IMR-90 (cell line): ENCODE measurements at regions of chr12 and their contacts with region 1.

Region 1: GRCh38 chr12:14167005-14167628 is 185.7 kb upstream of the GRIN2B start:
- DNase-seq: peak; percentile 41
- ATAC-seq: peak; percentile 93
- H3K4me3 ChIP-seq: no peak overlapping the region
- H3K27ac ChIP-seq: no peak overlapping the region
- H3K4me1 ChIP-seq: no peaks in the 10 kb centered on the region
- H3K27me3 ChIP-seq: no peaks in the 10 kb centered on the region
- CTCF ChIP-seq: peak; percentile 95
- POLR2A ChIP-seq: no peak
- RAD21 ChIP-seq: peak; percentile 89

Region 2: DNA sequence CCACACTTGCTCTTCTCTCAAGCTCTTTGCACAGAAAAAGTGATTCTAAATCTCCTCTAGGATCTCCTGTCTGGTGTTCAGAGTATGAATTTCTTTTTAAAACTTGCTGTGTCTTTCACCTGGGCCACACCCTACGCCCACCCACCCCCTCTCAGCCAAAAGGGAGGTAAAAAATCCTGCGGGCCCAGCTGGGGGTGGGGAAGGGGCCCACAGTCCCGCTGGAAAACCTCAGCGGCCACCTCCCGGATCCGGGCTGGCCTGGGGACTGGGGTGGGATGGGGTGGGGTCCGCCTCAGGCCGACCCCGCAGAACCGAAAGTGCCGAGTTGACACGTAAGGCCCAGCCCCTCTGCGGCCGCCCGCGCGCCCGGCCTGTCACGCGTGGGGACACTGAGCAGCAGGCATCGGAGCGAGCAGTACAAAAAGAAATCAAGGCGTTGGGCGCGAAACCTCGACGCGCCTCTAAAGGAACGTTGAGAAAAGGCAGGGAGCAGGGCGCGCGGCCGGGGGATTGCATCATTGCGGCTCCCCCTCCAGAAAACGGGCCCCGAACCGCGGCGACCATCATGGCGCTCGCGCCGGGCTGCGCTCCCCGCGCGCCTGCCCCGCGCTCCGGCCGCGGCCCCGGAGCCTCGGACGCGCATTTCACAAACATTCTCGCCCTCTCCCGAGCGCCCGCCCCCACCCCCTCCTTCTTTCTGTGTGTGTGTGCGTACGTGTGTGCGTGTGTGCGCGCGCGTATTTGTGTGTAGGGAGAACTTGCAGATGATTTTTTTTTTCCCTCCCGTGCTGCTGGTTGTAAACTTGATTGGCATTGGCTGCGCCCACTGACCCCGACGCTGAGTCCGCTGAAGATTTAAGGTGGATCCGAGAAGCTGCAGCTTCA is 1442.2 kb before region 1 on chr12:
- CTCF ChIA-PET with region 1: no interaction called
- POLR2A ChIA-PET with region 1: no interaction called
- dilution Hi-C with region 1: no loop called
- in situ Hi-C with region 1: no loop called
- intact Hi-C with region 1: loop called (anchors 10 kb)
- DNase-seq: peak; percentile 100
- ATAC-seq: peak; percentile 65
- H3K4me3 ChIP-seq: peak overlapping the region; percentile 94
- H3K27ac ChIP-seq: peak overlapping the region; percentile 100
- H3K4me1 ChIP-seq: no peaks in the 10 kb centered on the region; the same call in 1 of the 2 replicates
- H3K27me3 ChIP-seq: no peaks in the 10 kb centered on the region
- CTCF ChIP-seq: no peak
- POLR2A ChIP-seq: peak; percentile 71
- RAD21 ChIP-seq: no peak

Region 3: GRCh38 chr12:13255792-13256691 is 911.1 kb before region 1 on chr12:
- CTCF ChIA-PET with region 1: interaction called, 7 read pairs
- POLR2A ChIA-PET with region 1: no interaction called
- dilution Hi-C with region 1: no loop called
- in situ Hi-C with region 1: no loop called
- intact Hi-C with region 1: loop called (anchors 1 kb)
- DNase-seq: peak; percentile 92
- ATAC-seq: peak; percentile 100
- H3K4me3 ChIP-seq: peak overlapping the region; percentile 33
- H3K27ac ChIP-seq: no peak overlapping the region
- H3K4me1 ChIP-seq: peaks cover 5% of the 10 kb centered on the region
- H3K27me3 ChIP-seq: 0 out of 2 replicates have a peak, but pooled peaks cover 2% of the 10 kb centered on the region
- CTCF ChIP-seq: peak; percentile 98
- POLR2A ChIP-seq: no peak
- RAD21 ChIP-seq: peak; percentile 85

Region 4: GRCh38 chr12:13362260-13362841 is 804.8 kb before region 1 on chr12:
- CTCF ChIA-PET with region 1: no interaction called
- POLR2A ChIA-PET with region 1: no interaction called
- dilution Hi-C with region 1: no loop called
- in situ Hi-C with region 1: no loop called
- intact Hi-C with region 1: loop called (anchors 2 kb)
- DNase-seq: peak; percentile 5
- ATAC-seq: no peak
- H3K4me3 ChIP-seq: no peak overlapping the region
- H3K27ac ChIP-seq: no peak overlapping the region
- H3K4me1 ChIP-seq: no peaks in the 10 kb centered on the region
- H3K27me3 ChIP-seq: no peaks in the 10 kb centered on the region; the same call in 1 of the 2 replicates
- CTCF ChIP-seq: peak; percentile 44
- POLR2A ChIP-seq: no peak
- RAD21 ChIP-seq: peak; percentile 24; the same call in 1 of the 2 replicates

Region 5: DNA sequence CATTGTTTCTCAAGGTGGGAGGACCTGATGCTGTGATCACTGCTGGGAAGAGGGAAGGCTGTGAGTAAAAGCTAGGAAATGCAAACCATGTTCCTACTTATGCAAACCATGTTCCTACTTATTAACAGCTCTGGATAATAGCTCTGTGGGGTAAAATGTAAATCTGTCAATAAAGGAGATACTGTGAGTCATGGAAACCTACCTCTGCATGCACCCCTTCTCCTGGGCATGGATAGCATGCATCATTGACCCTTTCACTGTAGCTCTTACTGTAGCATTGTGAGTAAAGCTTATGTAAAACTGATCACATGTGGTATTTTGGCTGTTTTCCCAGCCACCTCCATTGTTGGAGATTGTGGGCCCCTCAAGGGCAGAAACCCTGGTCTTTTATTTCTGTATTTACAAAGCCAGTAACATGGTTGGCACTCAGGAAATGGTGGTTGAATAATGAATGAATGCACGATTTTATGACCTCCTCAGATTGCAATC is 439.4 kb before region 1 on chr12:
- CTCF ChIA-PET with region 1: no interaction called
- POLR2A ChIA-PET with region 1: no interaction called
- dilution Hi-C with region 1: no loop called
- in situ Hi-C with region 1: loop called (anchors 25 kb)
- intact Hi-C with region 1: no loop called
- DNase-seq: no peak
- ATAC-seq: no peak
- H3K4me3 ChIP-seq: no peak overlapping the region
- H3K27ac ChIP-seq: no peak overlapping the region
- H3K4me1 ChIP-seq: no peaks in the 10 kb centered on the region
- H3K27me3 ChIP-seq: no peaks in the 10 kb centered on the region
- CTCF ChIP-seq: no peak
- POLR2A ChIP-seq: no peak
- RAD21 ChIP-seq: no peak

Region 6: DNA sequence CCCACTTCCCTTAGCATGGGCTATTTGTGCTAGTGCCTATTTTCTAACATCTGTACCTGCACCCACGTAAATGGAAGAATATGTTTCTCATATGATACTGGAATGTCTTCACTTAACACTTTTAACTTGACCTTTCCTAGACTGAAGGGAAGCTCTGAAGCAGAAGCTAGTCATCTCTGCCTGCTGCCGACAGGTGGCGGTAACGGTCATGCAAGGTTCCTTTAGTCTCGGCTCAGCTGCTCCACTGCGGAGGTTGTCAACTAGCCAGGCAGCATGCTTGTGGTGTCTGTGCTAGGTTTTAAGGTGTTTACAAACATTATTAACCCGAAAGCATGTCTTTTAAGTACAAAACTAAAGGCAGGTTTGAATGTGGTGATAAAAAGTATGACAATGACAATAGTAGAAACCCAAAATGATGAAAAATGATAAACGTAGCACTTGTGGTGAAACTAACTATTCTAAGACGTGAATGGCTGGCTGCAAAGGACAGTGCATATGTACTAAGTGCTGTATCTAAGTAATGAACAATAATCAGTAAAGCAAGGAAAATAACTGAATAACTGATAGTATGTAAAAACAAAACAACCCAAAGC is 302.9 kb before region 1 on chr12:
- CTCF ChIA-PET with region 1: interaction called, 4 read pairs
- POLR2A ChIA-PET with region 1: no interaction called
- dilution Hi-C with region 1: no loop called
- in situ Hi-C with region 1: loop called (anchors 5 kb)
- intact Hi-C with region 1: loop called (anchors 1 kb)
- DNase-seq: peak; percentile 61
- ATAC-seq: peak; percentile 67
- H3K4me3 ChIP-seq: no peak overlapping the region
- H3K27ac ChIP-seq: no peak overlapping the region
- H3K4me1 ChIP-seq: no peaks in the 10 kb centered on the region
- H3K27me3 ChIP-seq: no peaks in the 10 kb centered on the region
- CTCF ChIP-seq: peak; percentile 67
- POLR2A ChIP-seq: no peak
- RAD21 ChIP-seq: peak; percentile 52; the same call in 1 of the 2 replicates